ENCODE measurements at regions of chr2 and their contacts with region 1.

Region 1: DNA sequence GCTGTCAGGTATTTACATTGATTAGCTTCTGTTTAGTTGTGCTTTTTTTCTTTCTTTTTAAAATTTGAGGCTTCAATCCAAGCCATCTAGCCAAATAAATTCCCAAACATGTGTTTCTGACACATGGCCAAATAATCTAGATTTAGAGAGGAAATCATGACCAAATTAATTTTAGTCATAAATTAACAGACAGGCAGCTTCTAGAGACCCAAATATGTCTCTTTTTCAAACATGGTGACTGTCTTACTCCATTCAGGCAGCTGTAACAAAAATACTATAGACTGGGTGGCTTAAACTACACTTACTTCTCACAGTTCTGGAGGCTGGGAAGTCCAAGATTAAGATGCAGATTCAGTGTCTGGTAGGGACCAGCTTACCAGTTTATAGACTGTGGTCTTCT is 23.2 kb upstream of the NAB1 start:
- DNase-seq: no peak
- H3K4me3 ChIP-seq: no peak overlapping the region
- H3K27ac ChIP-seq: no peak overlapping the region
- H3K4me1 ChIP-seq: peaks cover 18% of the 10 kb centered on the region
- H3K27me3 ChIP-seq: no peaks in the 10 kb centered on the region
- CTCF ChIP-seq: no peak
- POLR2A ChIP-seq: no peak

Region 2: DNA sequence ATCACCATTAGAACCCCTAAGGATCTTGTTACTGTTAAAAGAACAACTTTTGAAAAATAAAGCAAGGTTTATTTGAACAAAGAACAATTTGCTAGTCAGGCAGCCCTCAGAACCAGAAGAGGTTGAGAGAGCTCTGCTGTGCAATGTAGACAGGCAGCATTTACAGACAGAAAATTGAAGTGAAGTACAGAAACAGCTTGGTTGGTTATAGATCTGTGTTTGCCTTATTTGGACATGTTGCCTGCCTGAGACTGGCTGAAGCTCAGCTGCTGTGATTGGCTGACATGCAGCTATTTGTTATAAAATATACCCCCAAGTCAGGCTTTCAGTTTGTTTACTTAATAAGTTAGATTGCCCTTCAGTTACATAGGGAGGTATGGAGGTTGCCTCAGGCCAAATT is 575.7 kb before region 1 on chr2:
- intact Hi-C with region 1: no loop called
- DNase-seq: no peak
- H3K4me3 ChIP-seq: no peak overlapping the region
- H3K27ac ChIP-seq: no peak overlapping the region
- H3K4me1 ChIP-seq: no peaks in the 10 kb centered on the region
- H3K27me3 ChIP-seq: no peaks in the 10 kb centered on the region
- CTCF ChIP-seq: no peak
- POLR2A ChIP-seq: no peak

Region 3: DNA sequence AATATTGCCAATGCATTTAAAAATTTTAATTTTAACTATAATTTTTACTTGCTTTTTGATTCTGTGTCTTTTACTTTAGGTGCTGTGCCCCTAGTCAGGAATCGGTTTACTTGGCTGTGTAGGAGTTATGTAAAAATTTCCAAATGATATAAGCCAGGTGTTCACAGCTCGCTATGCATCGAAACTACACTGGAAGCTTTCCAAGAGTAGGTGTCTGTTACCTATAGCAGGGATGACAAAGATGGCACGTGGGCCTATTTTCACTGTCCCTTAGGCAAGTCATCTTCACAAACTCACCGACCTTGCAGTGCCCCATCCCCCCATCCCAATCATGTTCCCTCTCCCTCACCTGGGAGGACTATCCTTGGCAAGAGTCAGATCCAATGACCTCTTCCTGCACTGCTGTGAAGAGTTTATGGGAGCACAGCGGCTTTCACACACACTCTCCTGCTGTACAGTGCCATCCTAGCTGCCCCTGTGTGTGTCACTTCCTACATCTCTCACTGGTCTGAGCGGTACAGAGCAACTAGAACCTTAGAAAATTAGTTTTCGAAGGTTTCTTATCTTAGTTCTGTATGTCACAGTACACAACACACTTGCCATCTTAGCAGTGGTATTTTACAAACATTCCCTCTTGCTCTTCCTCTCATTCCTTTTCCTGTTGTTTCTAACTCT is 26.0 kb before region 1 on chr2:
- intact Hi-C with region 1: loop called (anchors 2 kb)
- DNase-seq: no peak
- H3K4me3 ChIP-seq: no peak overlapping the region
- H3K27ac ChIP-seq: no peak overlapping the region
- H3K4me1 ChIP-seq: peaks cover 11% of the 10 kb centered on the region
- H3K27me3 ChIP-seq: no peaks in the 10 kb centered on the region
- CTCF ChIP-seq: no peak
- POLR2A ChIP-seq: no peak

Region 4: GRCh38 chr2:190679813-190680591 is 54.3 kb after region 1 on chr2:
- intact Hi-C with region 1: no loop called
- DNase-seq: no peak
- H3K4me3 ChIP-seq: no peak overlapping the region
- H3K27ac ChIP-seq: no peak overlapping the region
- H3K4me1 ChIP-seq: peaks cover 5% of the 10 kb centered on the region
- H3K27me3 ChIP-seq: no peaks in the 10 kb centered on the region
- CTCF ChIP-seq: peak; percentile 9 to 39 (median 24)
- POLR2A ChIP-seq: no peak